ENCODE measurements at regions of chr6 and their contacts with region 1.

Region 1: DNA sequence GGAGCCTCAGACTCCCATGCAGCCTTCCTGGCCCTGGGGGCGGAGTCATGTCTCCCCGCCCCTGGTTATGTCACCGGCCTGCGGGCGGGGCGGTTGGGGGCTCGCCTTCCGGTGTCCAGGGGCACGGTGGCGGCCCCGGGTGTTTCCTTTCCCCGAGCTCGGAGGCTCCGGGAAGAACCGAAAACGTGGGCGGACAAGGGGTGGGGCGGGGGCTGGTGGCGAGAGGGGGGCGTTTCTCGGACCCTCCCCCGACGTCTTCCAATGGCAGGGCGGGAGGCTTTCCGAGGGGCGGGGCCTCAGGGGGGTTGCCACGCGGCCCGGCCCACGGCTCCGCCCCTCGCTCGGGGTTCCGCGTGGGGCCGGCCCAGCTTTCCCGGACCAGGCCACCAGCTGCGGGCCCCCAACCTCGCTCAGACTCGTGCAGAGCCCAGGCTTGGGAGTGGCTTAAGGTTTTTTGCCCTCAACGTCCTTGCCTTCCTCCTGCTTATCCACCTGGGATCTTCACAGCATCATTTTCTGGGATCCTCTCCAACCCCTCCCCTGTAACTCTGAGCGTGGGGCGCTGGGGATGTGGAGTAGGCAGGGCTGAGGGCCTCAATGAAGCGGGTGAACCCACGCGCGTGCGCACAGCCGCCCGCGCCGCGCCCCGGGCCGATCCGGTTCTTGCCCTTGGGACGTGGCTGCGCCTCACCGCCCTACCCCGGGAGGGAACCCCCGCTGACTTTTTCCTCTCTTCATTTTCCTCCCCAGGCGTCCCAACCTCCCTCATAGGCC is 2.1 kb upstream of the NRN1 start:
- DNase-seq: peak; percentile 72 to 88 (median 81)
- ATAC-seq: peak; percentile 81 to 87 (median 82)
- H3K4me3 ChIP-seq: peak overlapping the region; percentile 6 to 65 (median 60)
- H3K27ac ChIP-seq: peak overlapping the region in 11 of 12 donors; percentile 35 to 89 (median 68)
- H3K4me1 ChIP-seq: peaks cover 0 to 44% (median 20%) of the 10 kb centered on the region in 12 donors
- H3K27me3 ChIP-seq: peaks cover 46 to 89% (median 69%) of the 10 kb centered on the region in 9 donors
- CTCF ChIP-seq: no peak
- POLR2A ChIP-seq: no peak

Region 2: GRCh38 chr6:5246141-5247097 is 762.4 kb before region 1 on chr6:
- intact Hi-C with region 1: loop called in 1 of 10 experiments (anchors 5 kb)
- DNase-seq: no peak
- ATAC-seq: no peak
- H3K4me3 ChIP-seq: no peak overlapping the region
- H3K27ac ChIP-seq: no peak overlapping the region
- H3K4me1 ChIP-seq: no peaks in the 10 kb centered on the region
- H3K27me3 ChIP-seq: no peaks in the 10 kb centered on the region
- CTCF ChIP-seq: no peak
- POLR2A ChIP-seq: no peak

Region 3: GRCh38 chr6:6026513-6027205 is 17.8 kb after region 1 on chr6:
- intact Hi-C with region 1: loop called in 1 of 10 experiments (anchors 2 kb)
- DNase-seq: no peak
- ATAC-seq: peak in 2 of 4 donors; percentile 49 to 59
- H3K4me3 ChIP-seq: peak overlapping the region in 2 of 12 donors; percentile 5 to 11
- H3K27ac ChIP-seq: peak overlapping the region; percentile 24 to 85 (median 76)
- H3K4me1 ChIP-seq: peaks cover 0 to 19% (median 2%) of the 10 kb centered on the region in 12 donors
- H3K27me3 ChIP-seq: peaks cover 0 to 4% (median 0%) of the 10 kb centered on the region in 9 donors
- CTCF ChIP-seq: no peak
- POLR2A ChIP-seq: no peak

Region 4: GRCh38 chr6:6793388-6794250 is 784.8 kb after region 1 on chr6:
- intact Hi-C with region 1: no loop called
- DNase-seq: no peak
- ATAC-seq: peak in 3 of 4 donors; percentile 41 to 65 (median 61)
- H3K4me3 ChIP-seq: no peak overlapping the region
- H3K27ac ChIP-seq: peak overlapping the region in 1 of 12 donors; percentile 77
- H3K4me1 ChIP-seq: peaks cover 0 to 24% (median 0%) of the 10 kb centered on the region in 12 donors
- H3K27me3 ChIP-seq: no peaks in the 10 kb centered on the region
- CTCF ChIP-seq: no peak
- POLR2A ChIP-seq: no peak